HEK293T (cell line): ENCODE measurements at regions of chrX and their contacts with region 1.

Region 1: DNA sequence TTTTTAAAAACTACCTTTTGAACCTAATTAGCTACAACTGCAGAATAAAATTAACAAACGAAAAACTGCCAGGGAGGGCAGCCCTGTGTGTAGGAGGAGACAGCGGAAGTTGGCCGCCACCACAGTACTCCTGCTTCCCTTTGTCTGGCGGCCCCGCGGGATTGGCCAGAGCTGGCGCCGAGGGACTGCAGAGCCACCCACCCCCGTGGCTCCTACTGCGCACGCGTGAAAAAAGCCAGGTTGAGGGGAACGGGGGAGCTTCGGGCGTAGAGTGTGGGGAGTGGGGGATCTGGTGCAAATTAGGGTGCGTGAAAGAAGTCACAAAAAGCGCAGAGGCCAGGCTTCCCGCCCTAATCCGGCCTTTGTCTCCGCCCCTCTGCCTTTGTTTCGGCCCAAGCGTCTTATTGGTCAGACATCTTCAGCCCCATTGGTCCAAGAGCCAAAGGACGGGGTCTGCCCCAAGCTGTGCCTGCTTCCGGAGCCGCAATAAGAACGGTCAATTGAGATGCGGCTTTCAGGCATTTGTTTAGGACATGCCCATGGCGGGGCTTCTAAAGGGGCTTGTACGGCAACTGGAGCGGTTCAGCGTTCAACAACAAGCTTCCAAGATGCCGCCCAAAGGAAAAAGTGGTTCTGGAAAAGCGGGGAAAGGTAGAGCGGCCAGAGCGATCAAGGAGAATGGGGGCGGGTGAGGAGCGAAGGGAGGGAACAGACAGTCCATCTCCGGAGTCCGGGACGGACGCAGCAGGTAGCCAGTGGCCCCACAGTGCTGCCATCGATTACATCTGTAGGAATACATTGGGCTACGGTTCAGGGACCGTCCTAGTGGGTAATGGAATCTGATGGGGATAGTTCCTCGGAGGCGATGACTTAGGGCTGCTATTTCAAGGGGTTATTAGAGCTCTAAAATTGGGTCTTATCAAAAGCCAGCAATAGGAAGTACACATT is at the start of gene PIN4:
- DNase-seq: peak; percentile 96

Region 2: DNA sequence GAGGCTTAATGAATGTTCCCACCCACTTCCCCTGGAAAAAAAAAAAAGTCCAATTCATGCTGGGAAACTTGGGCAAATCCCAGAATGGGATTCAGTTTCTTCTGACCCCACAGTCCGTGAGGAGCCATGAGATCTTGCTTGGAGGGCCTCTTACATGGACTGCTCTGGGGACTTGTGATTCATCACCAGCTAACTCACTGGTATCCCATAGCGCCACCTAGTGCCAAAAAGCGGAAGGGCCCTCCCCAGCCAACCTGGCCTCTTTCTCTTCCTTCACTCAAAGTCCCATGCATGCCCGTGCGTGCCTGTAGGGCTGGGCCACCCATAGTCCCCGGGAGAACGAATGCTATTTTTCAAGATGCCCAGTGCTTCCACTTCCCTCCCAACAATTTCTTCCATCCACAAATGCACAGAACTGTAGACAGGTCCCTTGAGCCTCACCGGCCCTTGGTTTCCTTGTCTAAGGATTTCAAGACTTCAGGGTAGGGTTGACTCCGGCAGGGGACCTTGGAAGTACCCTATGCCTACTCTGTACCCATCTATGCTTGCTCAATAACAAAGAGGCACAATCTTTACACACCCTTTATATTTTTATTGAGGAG is 54.8 kb before region 1 on chrX:
- CTCF ChIA-PET with region 1: interaction called, 3 read pairs
- POLR2A ChIA-PET with region 1: interaction called, 19 read pairs
- DNase-seq: peak; percentile 93

Region 3: GRCh38 chrX:72159769-72160168 is 21.7 kb before region 1 on chrX:
- CTCF ChIA-PET with region 1: no interaction called
- POLR2A ChIA-PET with region 1: no interaction called
- DNase-seq: no peak

Region 4: GRCh38 chrX:72238721-72239475 is 57.4 kb after region 1 on chrX and contains the start of gene ERCC6L:
- CTCF ChIA-PET with region 1: no interaction called
- POLR2A ChIA-PET with region 1: interaction called, 13 read pairs
- DNase-seq: peak; percentile 94

Region 5: GRCh38 chrX:72349190-72349589 is 167.7 kb after region 1 on chrX:
- CTCF ChIA-PET with region 1: no interaction called
- POLR2A ChIA-PET with region 1: no interaction called
- DNase-seq: no peak